Heart right ventricle (tissue), 16 donors: ENCODE measurements at regions of chrX and their contacts with region 1.

Region 1: DNA sequence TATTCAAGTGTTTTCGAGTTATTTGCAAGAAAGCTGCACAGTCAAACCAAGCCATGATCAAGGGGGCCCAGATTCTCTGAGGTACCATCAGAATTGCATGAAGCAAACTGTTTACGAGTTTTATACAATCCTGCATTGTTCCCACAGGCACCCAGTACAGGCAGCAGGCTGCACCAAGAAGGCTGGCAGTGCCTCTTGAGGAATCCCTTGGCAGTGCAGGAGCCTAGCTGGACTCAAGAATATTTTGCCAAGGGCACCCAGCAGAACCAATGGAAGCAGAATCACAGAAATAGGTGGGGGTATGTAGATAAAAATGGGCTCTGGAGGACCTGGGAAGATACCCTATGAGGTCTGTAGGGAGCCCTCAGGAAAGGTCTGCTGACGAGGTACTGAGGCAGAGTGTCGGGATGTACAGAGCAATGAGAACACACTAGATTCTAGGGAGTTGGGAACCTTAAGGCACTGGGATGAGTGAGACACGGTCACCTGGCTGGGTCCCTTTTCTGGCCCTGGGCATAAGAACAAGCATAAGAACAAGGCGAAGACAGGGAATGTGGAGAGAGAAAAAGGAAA is 2.5 kb upstream of the PLP1 start:
- DNase-seq: no peak
- ATAC-seq: peak in 3 of 8 donors; percentile 56 to 61 (median 59)
- H3K4me3 ChIP-seq: no peak overlapping the region
- H3K27ac ChIP-seq: no peak overlapping the region
- H3K4me1 ChIP-seq: no peaks in the 10 kb centered on the region
- H3K27me3 ChIP-seq: peaks cover 0 to 11% (median 0%) of the 10 kb centered on the region in 7 donors
- CTCF ChIP-seq: peak in 7 of 9 donors; percentile 29 to 49 (median 43)

Region 2: GRCh38 chrX:103614992-103615391 is 159.2 kb before region 1 on chrX:
- intact Hi-C with region 1: no loop called
- DNase-seq: no peak
- ATAC-seq: no peak
- H3K4me3 ChIP-seq: no peak overlapping the region
- H3K27ac ChIP-seq: no peak overlapping the region
- H3K4me1 ChIP-seq: no peaks in the 10 kb centered on the region
- H3K27me3 ChIP-seq: no peaks in the 10 kb centered on the region
- CTCF ChIP-seq: no peak

Region 3: DNA sequence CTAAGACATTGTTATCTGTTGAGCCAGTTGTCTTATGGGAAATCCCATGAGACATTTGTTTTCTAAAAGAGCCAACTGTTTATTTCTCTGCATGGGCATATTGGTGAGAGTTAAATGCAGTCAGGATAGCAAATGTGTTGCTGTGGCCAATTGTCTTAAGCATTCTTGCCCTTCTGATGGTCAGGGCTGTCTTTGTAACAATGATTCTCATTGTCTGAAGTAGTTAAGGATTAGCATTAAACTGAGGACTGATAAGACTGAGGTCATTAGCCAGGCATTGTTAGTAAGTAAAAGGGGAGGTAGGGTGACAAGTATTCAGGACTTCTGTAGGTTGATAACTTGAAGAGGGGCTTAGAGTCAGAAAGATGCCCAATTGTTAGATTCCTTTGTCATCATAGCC is 76.5 kb before region 1 on chrX:
- intact Hi-C with region 1: loop called in 2 of 10 experiments (anchors 5 to 10 kb)
- DNase-seq: no peak
- ATAC-seq: no peak
- H3K4me3 ChIP-seq: no peak overlapping the region
- H3K27ac ChIP-seq: no peak overlapping the region
- H3K4me1 ChIP-seq: no peaks in the 10 kb centered on the region
- H3K27me3 ChIP-seq: peaks cover 0 to 15% (median 0%) of the 10 kb centered on the region in 7 donors
- CTCF ChIP-seq: no peak

Region 4: DNA sequence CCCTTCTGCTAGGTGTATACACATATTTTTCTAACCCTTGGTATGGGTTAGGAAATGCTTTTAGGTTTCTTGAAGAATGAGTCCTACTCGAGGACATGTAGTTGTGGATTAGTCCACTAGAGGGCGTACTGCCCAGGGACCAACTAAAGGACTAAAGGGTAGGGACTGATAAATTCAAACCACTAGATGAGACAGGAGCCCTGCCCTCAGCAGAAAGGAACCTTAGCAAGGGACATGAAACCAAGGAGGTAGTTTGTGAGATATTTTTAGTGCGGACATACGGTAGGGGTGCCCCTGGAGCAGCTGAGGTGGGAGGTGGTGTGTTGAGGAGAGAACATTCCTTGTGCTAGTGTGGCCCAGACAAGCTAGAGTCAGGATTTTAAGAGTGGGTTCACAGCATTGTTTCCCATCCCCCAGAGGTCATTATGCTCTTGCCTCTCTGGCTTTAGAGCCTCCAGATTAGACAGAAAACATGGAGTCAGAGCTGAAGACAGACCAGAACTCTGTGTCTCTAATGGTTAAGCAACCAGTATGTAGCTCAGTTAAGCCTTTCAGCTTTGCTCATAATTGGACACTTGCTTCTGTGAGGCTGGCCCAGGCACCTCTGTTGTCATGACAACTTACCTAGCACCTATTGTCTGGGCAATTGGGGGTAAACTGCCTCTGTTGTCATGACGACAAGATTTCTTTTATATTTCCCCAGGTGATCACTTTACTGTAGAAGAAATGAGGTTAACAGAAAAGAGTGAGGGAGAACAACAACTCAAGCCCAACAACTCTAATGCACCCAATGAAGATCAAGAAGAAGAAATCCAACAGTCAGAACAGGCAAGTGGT is 62.4 kb before region 1 on chrX:
- intact Hi-C with region 1: loop called in 3 of 10 experiments (anchors 10 kb)
- DNase-seq: peak in 1 of 2 donors; percentile 23
- ATAC-seq: peak in 2 of 8 donors; percentile 27 to 59
- H3K4me3 ChIP-seq: no peak overlapping the region
- H3K27ac ChIP-seq: no peak overlapping the region
- H3K4me1 ChIP-seq: no peaks in the 10 kb centered on the region
- H3K27me3 ChIP-seq: no peaks in the 10 kb centered on the region
- CTCF ChIP-seq: peak; percentile 17 to 76 (median 62)